GM10248 (cell line): ENCODE measurements at regions of chr18 and their contacts with region 1.

Region 1: DNA sequence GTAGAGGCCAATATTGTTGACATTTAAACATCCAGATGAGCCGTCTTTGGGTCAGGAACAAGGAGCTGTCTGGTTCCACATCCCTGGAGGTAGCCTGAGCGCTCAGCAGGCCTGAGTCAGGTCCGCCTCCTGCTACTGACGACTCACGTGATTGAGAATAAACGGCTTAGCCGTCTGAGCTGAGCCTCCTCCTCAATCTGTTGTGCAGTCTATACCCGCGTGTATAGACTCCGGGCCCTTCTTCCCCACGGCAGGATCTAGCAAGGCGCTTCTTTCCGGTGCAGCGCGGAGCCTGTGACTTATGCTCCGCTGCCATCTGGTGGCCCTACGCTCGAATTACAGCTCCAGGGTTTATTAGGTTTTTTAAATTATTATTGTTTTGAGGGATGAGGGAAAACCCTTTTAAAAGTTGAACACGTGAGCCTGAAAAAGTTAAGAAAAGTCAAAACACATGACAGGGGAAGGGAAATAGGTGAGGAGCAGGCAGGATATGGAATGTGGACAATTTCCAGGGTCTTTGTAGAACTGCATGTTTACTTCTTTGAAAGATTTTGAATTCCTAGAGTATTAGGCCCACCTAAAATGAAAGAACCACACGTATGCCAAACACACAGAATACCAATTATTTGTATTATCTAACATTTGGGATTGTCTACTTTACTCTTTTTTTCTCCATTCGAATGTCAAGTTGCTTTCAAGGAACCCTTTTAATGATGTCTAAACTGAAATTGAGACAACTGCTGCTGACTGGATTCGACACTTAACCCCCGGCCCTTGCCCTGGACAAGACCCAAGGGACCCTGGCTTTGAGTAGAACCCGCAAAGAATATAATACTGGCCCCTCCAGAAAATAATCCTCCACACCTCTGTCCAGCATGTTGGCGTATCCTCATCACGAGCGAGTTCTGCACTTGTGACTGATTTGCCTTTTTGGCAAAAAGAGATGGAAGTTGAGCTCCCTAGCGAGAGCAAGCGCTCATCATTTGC is 112.4 kb upstream of the ZNF236 start:
- DNase-seq: peak; percentile 72
- CTCF ChIP-seq: peak; percentile 91

Region 2: GRCh38 chr18:76265497-76266235 is 444.3 kb before region 1 on chr18:
- CTCF ChIA-PET with region 1: no interaction called
- POLR2A ChIA-PET with region 1: no interaction called
- DNase-seq: no peak
- CTCF ChIP-seq: no peak

Region 3: GRCh38 chr18:76573325-76574025 is 136.5 kb before region 1 on chr18:
- CTCF ChIA-PET with region 1: no interaction called
- POLR2A ChIA-PET with region 1: no interaction called
- DNase-seq: no peak
- CTCF ChIP-seq: no peak

Region 4: DNA sequence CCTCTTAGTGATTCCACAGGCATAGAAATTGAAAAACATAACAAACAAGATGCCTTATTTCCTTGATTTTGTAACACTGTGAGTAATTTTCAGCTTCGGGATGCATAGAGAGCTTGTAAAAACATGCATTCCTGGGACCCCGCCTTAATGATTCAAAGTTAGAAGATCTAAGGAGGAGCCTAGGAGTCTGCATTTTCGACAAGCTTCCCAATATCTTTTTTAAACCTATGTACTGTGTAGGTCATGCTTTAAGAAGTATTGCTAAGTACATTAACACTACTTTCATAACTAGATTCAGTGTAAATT is 105.1 kb before region 1 on chr18:
- CTCF ChIA-PET with region 1: no interaction called
- POLR2A ChIA-PET with region 1: no interaction called
- DNase-seq: no peak
- CTCF ChIP-seq: no peak

Region 5: GRCh38 chr18:76658627-76659026 is 51.3 kb before region 1 on chr18:
- CTCF ChIA-PET with region 1: interaction called, 10 read pairs
- POLR2A ChIA-PET with region 1: no interaction called
- DNase-seq: peak; percentile 43
- CTCF ChIP-seq: peak; percentile 18

Region 6: GRCh38 chr18:76697441-76697901 is 12.5 kb before region 1 on chr18:
- CTCF ChIA-PET with region 1: interaction called, 26 read pairs
- POLR2A ChIA-PET with region 1: no interaction called
- DNase-seq: no peak
- CTCF ChIP-seq: no peak

Region 7: DNA sequence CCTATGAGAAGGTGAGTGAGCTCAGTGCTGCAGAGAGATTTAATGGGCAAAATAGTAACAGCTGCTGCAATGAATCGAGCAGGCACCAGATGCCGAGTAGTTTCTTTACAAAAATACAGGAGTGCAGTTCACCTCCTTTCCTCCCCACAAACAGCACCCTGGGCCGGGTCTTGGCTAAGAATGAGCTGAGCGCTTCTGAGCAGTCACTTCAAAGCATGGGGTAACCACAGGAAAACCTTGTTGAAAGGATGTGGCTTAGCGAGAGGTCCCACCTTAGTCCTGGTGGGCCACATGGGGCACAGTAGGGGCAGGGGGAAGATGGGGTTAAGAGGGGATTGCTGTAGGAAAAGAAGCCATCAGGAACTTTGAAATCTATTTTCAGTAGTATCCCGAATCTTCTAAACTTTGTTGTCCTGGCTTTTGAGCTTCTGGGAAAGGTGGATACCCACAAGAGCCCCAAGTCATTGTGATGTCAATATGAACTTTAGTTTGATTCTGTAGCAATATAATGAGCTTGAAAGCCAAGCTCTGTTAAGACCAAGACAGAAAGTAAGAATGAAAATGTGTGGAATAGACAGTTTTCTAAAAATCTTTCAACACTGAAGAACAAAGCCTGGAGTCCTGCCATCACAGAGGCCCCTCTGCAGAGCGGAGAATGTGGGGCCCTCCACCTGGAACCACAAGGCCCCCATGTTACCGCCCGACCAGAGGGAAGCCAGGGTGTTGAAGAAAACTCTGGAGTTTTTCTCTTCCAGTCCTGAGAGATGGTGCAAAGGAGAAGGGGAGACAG is 11.4 kb after region 1 on chr18:
- CTCF ChIA-PET with region 1: interaction called, 14 read pairs
- POLR2A ChIA-PET with region 1: no interaction called
- DNase-seq: no peak
- CTCF ChIP-seq: no peak